HAP-1 (cell line): ENCODE measurements at regions of chr1 and their contacts with region 1.

Region 1: DNA sequence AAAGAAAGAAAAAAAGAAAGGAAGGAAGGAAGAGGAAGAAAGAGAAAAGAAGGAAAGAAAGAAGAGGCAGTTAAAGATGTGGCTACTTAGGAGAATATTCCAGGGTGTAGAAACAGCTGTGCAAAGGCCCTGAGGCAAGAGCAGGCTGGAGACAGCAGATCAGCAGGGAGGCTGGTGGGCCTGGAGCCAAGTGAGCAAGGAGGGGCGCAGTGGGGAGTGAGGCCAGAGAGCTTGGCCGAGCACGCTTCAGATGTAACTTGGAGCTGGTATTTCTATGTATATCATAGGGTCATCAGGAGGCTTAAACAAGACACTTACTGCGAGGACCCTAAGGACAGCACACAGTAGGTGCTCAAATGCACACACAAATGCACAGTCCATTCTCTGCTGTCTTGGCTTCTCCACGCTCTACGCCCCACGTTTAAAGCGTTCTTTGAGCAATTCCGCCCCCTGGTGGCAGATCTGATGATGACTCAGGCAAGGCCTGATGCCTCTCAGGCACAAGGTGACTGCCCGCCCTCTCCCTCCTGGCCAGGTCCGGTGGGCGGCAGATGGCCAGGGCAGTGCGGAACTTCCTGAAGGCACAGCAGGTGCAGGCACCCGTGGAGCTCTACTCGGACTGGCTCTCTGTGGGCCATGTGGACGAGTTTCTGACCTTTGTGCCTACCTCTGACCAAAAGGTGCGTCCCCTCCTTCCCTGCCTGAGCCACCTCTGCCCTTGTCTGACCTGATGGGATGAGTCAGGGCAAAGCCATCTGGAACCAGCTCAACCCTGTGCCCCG is 11.9 kb upstream of the PADI3 start:
- DNase-seq: peak; percentile 61 to 95
- H3K4me3 ChIP-seq: no peak overlapping the region
- H3K4me1 ChIP-seq: no peaks in the 10 kb centered on the region; the same call in 1 of the 2 replicates
- H3K27me3 ChIP-seq: peaks cover 10% of the 10 kb centered on the region

Region 2: DNA sequence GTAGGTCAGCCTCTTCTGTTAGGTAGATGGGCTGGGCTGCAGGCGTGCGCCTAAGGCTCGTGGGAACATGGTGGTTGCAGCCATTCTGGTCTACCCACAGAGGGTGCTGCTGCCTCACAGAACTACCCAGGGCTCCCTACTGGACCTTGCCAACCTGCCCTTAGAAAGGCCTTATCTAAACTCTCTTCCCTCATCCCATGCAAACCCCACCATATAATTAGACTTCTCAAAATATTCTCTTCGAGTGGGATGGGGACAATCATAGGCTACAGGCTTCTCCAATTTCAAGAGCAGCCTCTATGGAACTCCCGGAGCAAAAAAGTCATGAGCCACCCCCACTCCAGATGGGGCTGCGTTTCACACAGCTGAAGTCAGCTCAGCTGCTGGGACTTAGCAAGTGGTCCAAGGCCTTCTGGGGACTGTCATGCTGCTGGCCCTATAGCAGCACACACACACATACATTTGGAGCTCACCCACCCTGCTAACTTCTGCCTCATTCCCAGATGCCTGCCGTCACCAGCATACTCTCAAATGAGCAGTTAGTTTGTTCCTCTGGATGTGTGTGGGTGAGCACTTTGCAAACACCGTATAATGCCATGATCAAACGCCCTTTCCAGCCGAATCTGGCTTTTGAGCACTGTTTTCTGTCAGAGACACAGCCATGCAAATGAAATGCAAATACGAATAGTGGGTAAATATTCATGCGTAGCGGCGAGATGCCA is 177.1 kb before region 1 on chr1:
- in situ Hi-C with region 1: loop called (anchors 5 kb)
- DNase-seq: peak; percentile 47 to 78
- H3K4me3 ChIP-seq: no peak overlapping the region
- H3K4me1 ChIP-seq: peaks cover 6% of the 10 kb centered on the region
- H3K27me3 ChIP-seq: no peaks in the 10 kb centered on the region

Region 3: DNA sequence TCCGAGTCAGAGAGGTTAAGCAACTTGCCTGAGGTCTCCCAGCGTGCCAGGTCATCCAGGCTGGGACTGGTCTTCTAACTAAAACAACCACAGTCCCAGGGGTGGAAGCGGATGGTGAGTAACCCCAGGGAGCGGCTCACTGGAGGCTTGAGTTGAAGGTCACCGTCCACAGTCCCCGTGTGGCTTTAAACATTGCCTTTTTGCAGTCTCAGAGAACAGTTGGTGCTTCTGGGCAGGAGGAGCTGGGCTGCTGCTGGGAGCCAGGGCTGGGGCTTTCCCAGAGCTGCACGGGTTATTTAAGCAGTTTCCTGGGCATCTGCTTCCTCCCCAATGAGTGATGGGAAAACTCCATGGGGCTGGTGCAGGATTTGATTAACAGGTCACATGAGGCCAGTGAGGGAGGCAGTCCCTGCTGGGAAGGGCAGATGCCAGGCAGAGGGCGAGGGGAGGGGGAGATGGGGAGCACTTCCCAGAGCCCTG is 314.8 kb after region 1 on chr1:
- in situ Hi-C with region 1: no loop called
- DNase-seq: no peak
- H3K4me3 ChIP-seq: no peak overlapping the region
- H3K4me1 ChIP-seq: no peaks in the 10 kb centered on the region
- H3K27me3 ChIP-seq: no peaks in the 10 kb centered on the region